ENCODE measurements at regions of chr2 and their contacts with region 1.

Region 1: GRCh38 chr2:54522624-54523281 is 66.6 kb downstream of the SPTBN1 start:
- DNase-seq: no peak
- H3K4me3 ChIP-seq: no peak overlapping the region
- H3K27ac ChIP-seq: peak overlapping the region; percentile 83
- H3K4me1 ChIP-seq: peaks cover 99% of the 10 kb centered on the region
- H3K27me3 ChIP-seq: no peaks in the 10 kb centered on the region
- CTCF ChIP-seq: peak; percentile 71

Region 2: GRCh38 chr2:52703004-52703403 is 1819.7 kb before region 1 on chr2:
- intact Hi-C with region 1: no loop called
- DNase-seq: no peak
- H3K4me3 ChIP-seq: no peak overlapping the region
- H3K27ac ChIP-seq: no peak overlapping the region
- H3K4me1 ChIP-seq: no peaks in the 10 kb centered on the region
- H3K27me3 ChIP-seq: no peaks in the 10 kb centered on the region
- CTCF ChIP-seq: no peak

Region 3: GRCh38 chr2:54634564-54635511 is 112.1 kb after region 1 on chr2:
- intact Hi-C with region 1: loop called (anchors 10 kb)
- DNase-seq: peak; percentile 66
- H3K4me3 ChIP-seq: peak overlapping the region; percentile 42
- H3K27ac ChIP-seq: peak overlapping the region; percentile 90
- H3K4me1 ChIP-seq: peaks cover 100% of the 10 kb centered on the region
- H3K27me3 ChIP-seq: no peaks in the 10 kb centered on the region
- CTCF ChIP-seq: no peak

Region 4: GRCh38 chr2:55929476-55929875 is 1406.7 kb after region 1 on chr2:
- intact Hi-C with region 1: no loop called
- DNase-seq: no peak
- H3K4me3 ChIP-seq: no peak overlapping the region
- H3K27ac ChIP-seq: no peak overlapping the region
- H3K4me1 ChIP-seq: no peaks in the 10 kb centered on the region
- H3K27me3 ChIP-seq: peaks cover 36% of the 10 kb centered on the region
- CTCF ChIP-seq: no peak

Measured in left ventricle myocardium inferior (tissue), 1 donor.